A549 (cell line): ENCODE measurements at regions of chr1 and their contacts with region 1.

Region 1: GRCh38 chr1:223087291-223088255 is 55.5 kb downstream of the TLR5 start:
- DNase-seq: no peak
- ATAC-seq: no peak
- H3K4me3 ChIP-seq: no peak overlapping the region
- H3K27ac ChIP-seq: no peak overlapping the region
- H3K4me1 ChIP-seq: no peaks in the 10 kb centered on the region
- CTCF ChIP-seq: no peak
- EP300 ChIP-seq: no peak
- POLR2A ChIP-seq: no peak
- RAD21 ChIP-seq: no peak

Region 2: GRCh38 chr1:222736972-222737371 is 350.6 kb before region 1 on chr1 and contains the start of gene FAM177B:
- CTCF ChIA-PET with region 1: interaction called, 19 read pairs
- POLR2A ChIA-PET with region 1: no interaction called
- DNase-seq: no peak
- ATAC-seq: peak in 1 of 2 experiments; percentile 25; a peak in 1 of 6 replicates
- H3K4me3 ChIP-seq: no peak within 1 kb of the TSS
- H3K27ac ChIP-seq: no peak within 1 kb of the TSS
- H3K4me1 ChIP-seq: peaks cover 9% of the 10 kb centered on the region; the same call in 2 of the 3 replicates
- CTCF ChIP-seq: no peak
- EP300 ChIP-seq: no peak
- POLR2A ChIP-seq: no peak
- RAD21 ChIP-seq: no peak
- polyA plus RNA-seq, gene FAM177B: not detected in 2 replicates

Region 3: DNA sequence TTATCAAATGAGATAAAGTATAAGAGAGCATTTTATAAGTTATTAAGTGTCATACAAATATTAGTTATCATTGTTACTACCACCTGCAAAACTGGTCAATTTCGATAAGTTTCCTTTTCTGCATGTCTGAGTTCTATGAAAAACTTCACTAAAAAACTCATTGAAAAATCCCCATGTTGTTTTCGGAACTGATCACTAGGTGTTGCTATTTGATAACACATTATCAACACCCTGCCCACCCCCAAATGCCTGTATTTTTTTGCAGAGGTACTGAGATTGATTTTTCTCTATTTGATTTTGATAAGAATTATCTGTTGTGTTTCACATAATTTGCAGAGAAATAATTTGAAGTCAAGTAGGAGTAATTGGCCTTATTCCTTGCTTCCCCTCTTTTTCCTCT is 294.8 kb before region 1 on chr1:
- CTCF ChIA-PET with region 1: interaction called, 84 read pairs
- POLR2A ChIA-PET with region 1: no interaction called
- DNase-seq: peak; percentile 19 to 45
- ATAC-seq: peak in 1 of 2 experiments; percentile 54; a peak in 2 of 6 replicates
- H3K4me3 ChIP-seq: no peak overlapping the region
- H3K27ac ChIP-seq: no peak overlapping the region
- H3K4me1 ChIP-seq: 0 out of 3 replicates have a peak, but pooled peaks cover under 1% of the 10 kb centered on the region
- CTCF ChIP-seq: peak; percentile 90
- EP300 ChIP-seq: no peak
- POLR2A ChIP-seq: no peak
- RAD21 ChIP-seq: peak; percentile 84 to 94

Region 4: DNA sequence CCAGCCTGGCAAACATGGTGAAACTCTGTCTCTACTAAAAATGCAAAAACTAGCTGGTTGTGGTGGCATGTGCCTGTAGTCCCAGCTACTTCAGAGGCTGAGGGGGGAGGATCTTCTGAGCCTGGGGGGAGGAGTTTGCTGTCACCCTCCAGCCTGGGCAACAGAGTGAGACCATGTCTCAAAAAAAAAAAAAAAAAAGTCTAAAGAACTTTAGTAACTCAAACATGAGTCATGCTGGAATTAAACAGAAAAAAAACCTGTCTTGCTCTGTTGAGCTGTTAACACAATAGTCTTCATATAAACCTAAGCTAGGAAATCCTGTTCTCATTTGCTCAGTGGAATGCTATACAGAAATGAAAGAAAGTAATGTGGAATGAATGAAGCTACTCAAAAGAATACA is 289.5 kb before region 1 on chr1:
- CTCF ChIA-PET with region 1: interaction called, 84 read pairs
- POLR2A ChIA-PET with region 1: no interaction called
- DNase-seq: peak in 1 of 2 experiments; percentile 20
- ATAC-seq: peak in 1 of 2 experiments; percentile 57; a peak in 3 of 6 replicates
- H3K4me3 ChIP-seq: no peak overlapping the region
- H3K27ac ChIP-seq: no peak overlapping the region
- H3K4me1 ChIP-seq: peaks cover 10% of the 10 kb centered on the region; the same call in 2 of the 3 replicates
- CTCF ChIP-seq: no peak
- EP300 ChIP-seq: no peak
- POLR2A ChIP-seq: no peak
- RAD21 ChIP-seq: no peak

Region 5: DNA sequence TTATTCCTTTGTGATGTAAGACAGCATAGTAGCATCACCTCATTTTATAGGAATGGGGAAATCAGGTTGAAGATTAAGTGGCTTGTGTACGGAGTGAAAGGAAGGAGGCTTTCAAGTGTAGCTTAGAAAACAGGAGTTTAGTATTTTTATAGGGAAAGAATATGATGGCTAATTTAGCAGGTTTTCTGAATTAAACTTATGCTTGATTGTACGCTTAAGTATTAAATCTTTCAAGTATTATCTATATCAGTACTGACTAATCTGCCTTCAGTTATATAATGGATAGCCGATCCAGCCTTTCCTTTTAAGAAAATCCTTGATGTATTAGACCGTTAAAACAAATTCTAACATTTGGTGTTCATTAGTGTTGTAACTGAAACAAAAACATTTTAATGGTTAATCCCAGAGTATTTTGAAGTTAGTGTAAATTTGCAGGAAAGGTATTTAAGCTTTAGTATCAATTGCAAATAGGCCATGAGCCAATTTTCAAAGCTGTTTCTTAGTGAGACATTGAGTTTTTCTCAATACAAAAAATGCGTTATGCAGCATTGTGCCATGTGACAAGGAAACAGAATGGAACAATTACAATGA is 243.3 kb before region 1 on chr1:
- CTCF ChIA-PET with region 1: no interaction called
- POLR2A ChIA-PET with region 1: no interaction called
- DNase-seq: peak in 1 of 2 experiments; percentile 37
- ATAC-seq: peak in 1 of 2 experiments; percentile 65; a peak in 2 of 6 replicates
- H3K4me3 ChIP-seq: no peak overlapping the region
- H3K27ac ChIP-seq: no peak overlapping the region
- H3K4me1 ChIP-seq: peaks cover 25% of the 10 kb centered on the region; the same call in 2 of the 3 replicates
- CTCF ChIP-seq: no peak
- EP300 ChIP-seq: no peak
- POLR2A ChIP-seq: no peak
- RAD21 ChIP-seq: no peak

Region 6: DNA sequence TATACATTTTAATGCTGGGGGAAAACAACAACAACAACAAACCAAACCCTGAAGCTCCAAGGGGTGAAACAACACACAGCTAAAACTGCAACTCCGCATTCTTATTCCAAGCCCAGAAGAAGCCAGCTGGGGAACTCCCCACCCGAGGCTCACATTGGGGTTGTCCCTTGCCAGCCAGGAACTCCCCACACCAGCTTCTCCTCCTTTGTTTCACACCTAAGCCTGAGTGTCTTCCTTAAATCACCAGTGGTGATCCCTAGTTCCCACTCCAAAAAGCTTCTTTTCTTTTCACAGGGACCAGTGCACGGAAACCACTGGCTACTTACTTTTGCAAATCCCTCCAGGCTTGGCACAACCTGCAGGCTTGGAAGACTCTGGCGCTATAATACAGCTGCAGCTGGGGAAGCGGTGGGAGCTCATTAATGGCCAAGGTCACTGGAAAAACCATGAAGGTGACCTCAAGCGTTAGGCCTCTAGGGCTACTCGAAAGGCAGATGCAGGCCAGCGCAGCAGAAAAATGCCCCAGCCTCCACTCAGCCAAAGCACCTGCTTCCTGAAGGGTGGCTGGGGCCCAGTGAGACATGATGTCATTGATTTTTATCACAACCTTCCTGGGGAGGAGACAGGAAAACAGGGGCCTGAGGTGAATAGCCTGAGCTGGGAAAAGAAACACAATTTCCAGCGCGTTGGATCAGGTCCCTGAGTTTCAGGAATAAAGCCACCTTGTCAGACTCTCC is 15.4 kb after region 1 on chr1:
- CTCF ChIA-PET with region 1: interaction called, 22 read pairs
- POLR2A ChIA-PET with region 1: no interaction called
- DNase-seq: no peak
- ATAC-seq: no peak
- H3K4me3 ChIP-seq: no peak overlapping the region
- H3K27ac ChIP-seq: no peak overlapping the region
- H3K4me1 ChIP-seq: no peaks in the 10 kb centered on the region
- CTCF ChIP-seq: no peak
- EP300 ChIP-seq: no peak
- POLR2A ChIP-seq: no peak
- RAD21 ChIP-seq: no peak